Caco-2 (cell line): ENCODE measurements at regions of chr1 and their contacts with region 1.

Region 1: GRCh38 chr1:17141441-17142197 is 22.4 kb upstream of the PADI2 start:
- DNase-seq: no peak
- H3K4me3 ChIP-seq: no peak overlapping the region
- H3K4me3 Mint-ChIP-seq: no peak overlapping the region
- H3K27ac Mint-ChIP-seq: no peak overlapping the region
- H3K4me1 ChIP-seq: no peaks in the 10 kb centered on the region
- H3K4me1 Mint-ChIP-seq: no peaks in the 10 kb centered on the region
- H3K27me3 ChIP-seq: no peaks in the 10 kb centered on the region; the same call in 1 of the 2 replicates
- H3K27me3 Mint-ChIP-seq: peaks cover 2% of the 10 kb centered on the region
- CTCF ChIP-seq: no peak

Region 2: DNA sequence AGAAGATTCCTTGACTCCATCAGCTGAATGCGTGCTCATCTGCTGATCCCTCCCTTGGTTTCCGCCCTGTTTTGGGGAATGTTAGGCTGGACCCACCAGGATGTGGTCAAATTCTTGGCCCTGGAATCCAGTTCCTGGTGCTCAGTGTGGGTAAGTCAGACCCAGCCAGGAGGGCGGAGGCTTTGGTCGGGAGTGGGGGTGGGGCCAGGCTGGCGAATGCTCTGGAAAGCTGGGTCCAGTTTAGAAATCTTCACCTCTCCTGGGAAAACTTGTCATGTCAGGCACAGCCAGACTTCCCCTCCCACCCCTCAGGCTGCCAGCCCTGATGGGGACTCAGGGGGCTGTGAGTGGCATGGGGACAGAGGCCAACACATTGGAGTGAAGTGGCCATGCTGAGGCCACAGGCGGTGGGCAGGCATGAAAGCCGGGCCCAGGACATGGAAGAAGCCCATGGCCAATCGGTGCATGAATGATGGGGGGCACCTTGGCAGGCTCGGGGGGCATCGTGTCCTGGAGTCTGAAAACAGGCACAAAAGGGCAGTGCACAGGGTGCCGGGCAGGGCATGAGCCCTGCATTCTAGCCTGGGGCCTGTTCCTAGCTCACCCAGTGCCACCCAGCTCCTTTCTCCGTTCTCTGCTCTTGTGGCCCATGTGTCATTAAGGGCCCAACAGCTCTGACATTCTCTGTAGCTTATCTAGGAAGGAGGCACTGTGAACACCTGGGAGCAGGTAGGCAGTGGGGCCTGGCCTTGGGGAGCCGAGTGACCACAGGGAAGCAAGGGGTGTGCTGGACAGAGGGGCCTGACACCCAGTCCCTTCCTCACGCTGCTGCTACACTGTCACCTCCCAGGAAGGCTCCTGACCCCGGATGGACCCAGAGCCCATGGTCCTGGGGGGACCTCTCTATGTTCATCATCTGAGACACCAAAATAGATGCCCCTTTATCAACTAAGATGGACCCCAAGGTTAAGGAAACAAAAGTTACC is 48.7 kb after region 1 on chr1:
- CTCF ChIA-PET with region 1: no interaction called
- POLR2A ChIA-PET with region 1: no interaction called
- intact Hi-C with region 1: loop called (anchors 10 kb)
- DNase-seq: no peak
- H3K4me3 ChIP-seq: no peak overlapping the region
- H3K4me3 Mint-ChIP-seq: no peak overlapping the region
- H3K27ac Mint-ChIP-seq: no peak overlapping the region
- H3K4me1 ChIP-seq: no peaks in the 10 kb centered on the region
- H3K4me1 Mint-ChIP-seq: no peaks in the 10 kb centered on the region
- H3K27me3 ChIP-seq: no peaks in the 10 kb centered on the region
- H3K27me3 Mint-ChIP-seq: no peaks in the 10 kb centered on the region
- CTCF ChIP-seq: no peak